ENCODE measurements at regions of chr12 and their contacts with region 1.

Region 1: DNA sequence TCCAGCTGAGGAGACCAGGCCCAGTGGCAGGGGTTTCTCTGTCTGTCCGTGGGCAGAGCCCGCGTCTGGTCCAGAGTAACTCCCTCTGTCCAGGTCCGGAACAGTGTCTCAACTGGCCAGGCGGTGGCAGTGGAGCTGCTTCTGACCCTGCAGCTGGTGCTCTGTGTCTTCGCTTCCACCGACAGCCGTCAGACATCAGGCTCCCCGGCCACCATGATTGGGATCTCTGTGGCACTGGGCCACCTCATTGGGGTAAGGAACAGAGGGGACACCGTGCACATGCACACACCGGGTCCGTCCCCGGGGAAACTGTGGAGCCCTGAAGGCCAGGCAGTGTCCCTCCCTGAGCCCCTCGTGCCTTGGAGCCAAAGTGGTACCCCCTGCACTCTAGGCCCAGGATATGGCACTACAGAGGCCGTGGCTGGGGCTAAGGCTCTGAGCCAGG is 1.5 kb downstream of the AQP6 start:
- DNase-seq: peak; percentile 80
- H3K4me3 ChIP-seq: no peak overlapping the region
- H3K27ac ChIP-seq: no peak overlapping the region
- H3K4me1 ChIP-seq: peaks cover 13% of the 10 kb centered on the region
- H3K27me3 ChIP-seq: no peaks in the 10 kb centered on the region
- CTCF ChIP-seq: peak; percentile 21 to 51 (median 42)
- POLR2A ChIP-seq: no peak

Region 2: GRCh38 chr12:49847161-49847560 is 127.1 kb before region 1 on chr12:
- intact Hi-C with region 1: no loop called
- DNase-seq: no peak
- H3K4me3 ChIP-seq: no peak overlapping the region
- H3K27ac ChIP-seq: no peak overlapping the region
- H3K4me1 ChIP-seq: peaks cover 6% of the 10 kb centered on the region
- H3K27me3 ChIP-seq: no peaks in the 10 kb centered on the region
- CTCF ChIP-seq: no peak
- POLR2A ChIP-seq: no peak

Region 3: DNA sequence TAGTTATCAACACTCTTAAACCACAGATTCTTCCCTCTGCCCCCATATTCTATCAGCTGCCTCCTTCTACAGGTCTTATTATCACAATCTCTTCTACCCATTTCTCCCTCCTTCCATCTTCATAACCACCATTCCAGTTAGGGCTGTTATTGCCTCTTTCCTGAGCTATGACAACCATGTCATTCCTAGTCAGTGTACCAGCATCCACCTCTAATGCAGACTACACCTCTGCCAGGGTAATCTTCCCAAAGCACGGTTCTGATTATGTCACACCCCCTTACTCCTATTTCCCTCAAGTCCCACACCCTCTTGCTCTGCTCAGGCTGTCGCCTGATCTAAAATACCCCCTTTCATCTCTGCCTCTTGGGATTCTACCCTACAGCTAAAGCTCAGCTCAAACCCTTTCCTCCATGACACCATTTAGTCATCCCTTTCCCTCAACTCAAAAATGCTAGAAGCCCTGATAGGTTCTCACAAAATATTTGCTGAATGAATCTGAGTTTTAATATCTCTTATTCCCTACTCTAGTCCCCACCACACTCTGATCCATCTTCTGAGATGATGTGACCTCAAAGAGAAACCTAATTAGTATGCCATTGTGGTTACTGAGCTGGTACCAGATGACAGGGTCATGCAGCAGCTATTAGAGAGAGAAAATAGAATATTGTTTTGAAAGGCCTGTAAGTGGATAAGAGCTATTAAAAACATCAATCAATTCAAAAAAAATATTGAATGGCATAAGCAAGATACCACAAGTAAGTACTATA is 39.3 kb after region 1 on chr12:
- intact Hi-C with region 1: loop called (anchors 5 kb)
- DNase-seq: no peak
- H3K4me3 ChIP-seq: no peak overlapping the region
- H3K27ac ChIP-seq: no peak overlapping the region
- H3K4me1 ChIP-seq: no peaks in the 10 kb centered on the region
- H3K27me3 ChIP-seq: no peaks in the 10 kb centered on the region
- CTCF ChIP-seq: no peak
- POLR2A ChIP-seq: no peak

Region 4: DNA sequence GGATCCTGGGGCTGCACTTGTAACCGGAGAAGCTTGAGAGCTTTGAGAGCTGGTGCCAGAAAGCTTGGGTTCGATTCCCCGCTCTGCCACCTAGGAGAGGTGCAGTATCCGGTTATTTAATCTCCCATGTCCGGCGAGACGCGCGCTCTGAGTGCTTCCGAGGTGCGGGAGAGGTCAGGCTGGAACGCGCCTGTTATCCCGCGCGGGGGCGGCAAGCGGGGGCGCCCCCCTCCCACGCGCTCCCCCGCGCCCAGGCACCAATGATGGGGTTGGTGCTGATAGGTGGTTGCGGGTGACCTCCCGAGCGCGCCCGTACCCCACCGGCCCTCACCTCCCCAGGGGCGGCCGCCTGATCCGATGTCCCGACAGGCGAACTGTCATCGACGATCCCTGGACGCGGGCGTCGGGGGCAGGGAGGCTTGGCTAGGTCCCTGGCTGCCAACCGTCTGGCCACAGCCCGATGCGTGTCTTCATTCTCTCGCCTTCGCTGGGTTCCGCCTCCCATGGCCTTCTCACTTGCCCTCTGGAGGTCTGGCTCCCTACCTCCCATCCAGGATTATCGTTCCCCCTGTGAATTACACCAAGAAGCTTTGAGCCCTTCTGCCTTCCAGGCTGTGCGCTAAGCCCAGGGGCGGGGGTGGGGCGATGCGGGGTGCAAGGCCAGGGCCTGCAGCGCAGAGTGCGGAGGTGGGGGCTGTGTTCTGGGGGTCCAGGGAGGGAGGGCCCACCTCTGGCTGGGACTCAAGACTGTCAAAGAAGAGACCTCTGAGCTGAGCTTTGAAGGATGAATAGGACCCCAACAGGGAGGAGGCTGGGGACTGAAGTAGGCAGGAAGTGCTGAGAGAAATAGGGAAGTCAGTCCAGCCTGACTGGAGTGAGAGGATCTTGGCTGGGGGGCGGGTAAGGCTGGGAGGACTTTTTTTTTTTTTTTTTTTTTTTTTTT is 58.7 kb after region 1 on chr12:
- intact Hi-C with region 1: no loop called
- DNase-seq: peak; percentile 26
- H3K4me3 ChIP-seq: peak overlapping the region; percentile 39 to 53
- H3K27ac ChIP-seq: no peak overlapping the region
- H3K4me1 ChIP-seq: no peaks in the 10 kb centered on the region
- H3K27me3 ChIP-seq: no peaks in the 10 kb centered on the region
- CTCF ChIP-seq: no peak
- POLR2A ChIP-seq: no peak

Region 5: DNA sequence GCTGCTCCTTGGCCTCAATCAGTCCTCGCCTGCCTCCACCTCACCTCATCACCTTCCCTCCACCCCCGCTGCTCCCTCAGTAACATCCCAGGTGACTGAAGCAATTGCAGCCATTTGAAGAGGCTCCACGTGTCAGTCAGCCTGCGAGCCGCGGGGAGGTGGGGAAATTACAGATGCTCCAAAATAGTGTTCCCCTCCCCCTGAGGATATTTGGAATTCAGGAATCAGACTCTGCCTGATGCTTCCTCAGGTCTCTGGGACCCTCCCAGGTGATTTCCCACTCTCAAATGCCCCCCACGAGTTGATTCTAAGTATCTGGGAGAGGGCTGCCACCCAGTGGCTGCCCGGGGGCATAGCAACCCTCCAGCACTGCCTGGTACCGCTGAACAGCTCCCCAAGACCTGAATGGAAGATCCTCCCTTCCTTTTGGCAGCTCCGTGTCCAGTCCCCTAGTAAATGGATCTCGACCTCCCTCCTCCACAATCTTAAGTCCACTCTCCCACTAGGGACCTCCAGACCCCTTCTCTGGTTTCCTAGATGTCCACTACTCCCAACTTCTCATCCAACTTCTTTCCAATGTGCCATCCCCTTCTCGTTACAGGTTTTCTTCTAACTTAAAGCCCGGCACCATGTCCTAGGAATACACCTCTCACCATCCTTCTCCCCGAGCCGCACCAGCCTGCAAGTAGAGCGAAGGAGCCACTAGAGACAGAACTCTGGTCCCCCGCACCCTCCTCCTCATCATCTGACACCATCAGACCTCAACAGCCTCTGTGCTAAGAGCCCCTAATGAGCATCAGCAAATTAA is 81.8 kb after region 1 on chr12:
- intact Hi-C with region 1: loop called (anchors 5 kb)
- DNase-seq: peak; percentile 58
- H3K4me3 ChIP-seq: no peak overlapping the region
- H3K27ac ChIP-seq: no peak overlapping the region
- H3K4me1 ChIP-seq: peaks cover 17% of the 10 kb centered on the region
- H3K27me3 ChIP-seq: no peaks in the 10 kb centered on the region
- CTCF ChIP-seq: peak; percentile 57 to 84 (median 62)
- POLR2A ChIP-seq: no peak

Region 6: DNA sequence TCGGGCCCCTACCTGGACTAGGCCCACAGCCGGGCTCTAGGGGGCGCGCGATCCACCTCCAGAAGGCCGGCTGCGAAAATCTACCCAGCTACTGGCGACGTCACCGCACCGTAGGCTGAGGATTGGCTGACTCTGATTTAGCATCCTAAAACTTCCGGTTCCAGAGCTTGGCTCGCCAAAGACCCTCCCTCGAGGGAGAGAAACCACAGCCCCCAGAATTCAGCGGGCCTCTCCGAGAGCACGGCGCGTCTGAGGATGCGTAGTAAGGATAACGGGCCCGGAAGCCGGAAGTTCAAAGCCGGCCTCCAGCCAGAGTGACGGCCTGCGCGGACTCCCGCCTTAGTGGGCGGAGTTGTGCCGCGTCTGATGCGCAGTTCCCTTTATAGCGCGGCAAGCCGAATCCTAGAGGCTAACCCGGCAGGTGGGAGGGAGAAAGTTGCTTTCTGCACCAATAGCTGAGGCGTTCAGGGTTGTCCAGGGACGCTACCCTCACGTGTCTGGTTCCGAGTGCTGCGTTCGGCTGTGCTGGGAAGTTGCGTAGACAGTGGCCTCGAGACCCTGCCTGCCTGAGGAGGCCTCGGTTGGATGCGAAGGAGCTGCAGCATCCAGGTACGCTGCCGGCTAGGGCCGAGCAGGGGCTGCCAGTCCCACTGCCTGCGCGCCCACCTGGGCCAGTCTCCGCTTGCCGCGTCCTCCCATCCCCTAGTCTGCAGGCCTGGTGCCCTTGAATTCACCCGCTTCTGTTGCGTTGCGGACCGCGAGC is 137.6 kb after region 1 on chr12 and contains the start of gene COX14:
- intact Hi-C with region 1: no loop called
- DNase-seq: peak; percentile 100
- H3K4me3 ChIP-seq: peak within 1 kb of the TSS; percentile 72 to 88
- H3K27ac ChIP-seq: peak within 1 kb of the TSS; percentile 69 to 86
- H3K4me1 ChIP-seq: peaks cover 18% of the 10 kb centered on the region
- H3K27me3 ChIP-seq: no peaks in the 10 kb centered on the region
- CTCF ChIP-seq: peak; percentile 83 to 94 (median 91)
- POLR2A ChIP-seq: peak; percentile 66
- total RNA-seq, gene COX14: 38.7 to 54.9 TPM